ENCODE measurements at regions of chr4 and their contacts with region 1.

Region 1: DNA sequence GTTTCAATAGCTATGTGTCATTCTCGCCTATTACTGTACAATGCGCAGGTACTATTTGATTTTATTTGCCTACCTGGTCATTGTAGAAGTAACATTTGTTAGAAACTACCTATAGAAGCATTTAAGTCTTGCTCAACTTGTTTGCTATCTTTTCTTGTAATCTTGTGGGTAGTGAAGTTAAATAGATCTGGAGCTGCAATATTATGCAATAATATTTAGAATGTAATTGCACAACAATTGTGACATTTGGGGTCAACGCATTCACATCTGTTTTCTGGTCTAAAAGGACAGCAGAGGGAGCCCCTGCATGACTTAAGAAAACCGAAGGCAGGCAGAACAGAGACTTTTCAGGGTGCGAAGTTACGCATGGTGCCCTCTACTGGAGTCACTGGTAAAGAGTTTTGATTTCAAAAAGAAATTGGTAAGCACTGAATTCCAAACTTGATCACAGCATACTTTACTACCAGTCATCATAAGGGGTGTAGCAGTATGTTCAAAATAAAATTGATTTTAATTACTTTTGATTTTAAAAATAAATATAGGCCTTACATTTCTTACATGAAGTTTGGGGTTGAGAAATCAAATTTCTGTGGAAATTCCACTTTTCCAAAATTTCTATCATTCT is 503.2 kb upstream of the FAM241A start:
- DNase-seq: peak; percentile 49
- CTCF ChIP-seq: peak; percentile 77

Region 2: GRCh38 chr4:110631584-110632505 is 1010.2 kb before region 1 on chr4:
- in situ Hi-C with region 1: loop called (anchors 25 kb)
- DNase-seq: peak; percentile 84
- CTCF ChIP-seq: peak; percentile 59

Region 3: DNA sequence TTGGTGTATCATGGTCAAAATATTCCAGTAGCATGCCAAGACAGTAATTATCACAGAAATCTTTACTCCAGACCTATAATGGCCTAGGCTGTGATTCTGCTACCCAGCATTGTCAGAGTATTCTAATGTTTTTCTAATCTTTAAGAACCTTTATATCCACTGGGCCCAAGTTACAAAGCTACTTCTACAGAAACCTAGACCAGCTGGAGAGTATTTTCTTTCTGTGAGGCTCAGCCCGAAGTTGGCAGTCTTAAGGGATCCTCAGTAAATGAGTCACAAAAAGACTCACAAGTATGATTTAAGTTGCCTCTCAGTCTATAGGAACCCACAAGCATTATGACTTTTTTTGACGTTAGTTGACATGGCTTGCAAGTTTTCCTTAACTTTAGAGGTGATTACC is 135.4 kb before region 1 on chr4:
- in situ Hi-C with region 1: no loop called
- DNase-seq: no peak
- CTCF ChIP-seq: no peak

Region 4: GRCh38 chr4:111937368-111937767 is 295.3 kb after region 1 on chr4:
- in situ Hi-C with region 1: loop called (anchors 10 kb)
- DNase-seq: peak; percentile 17
- CTCF ChIP-seq: peak; percentile 36

Region 5: DNA sequence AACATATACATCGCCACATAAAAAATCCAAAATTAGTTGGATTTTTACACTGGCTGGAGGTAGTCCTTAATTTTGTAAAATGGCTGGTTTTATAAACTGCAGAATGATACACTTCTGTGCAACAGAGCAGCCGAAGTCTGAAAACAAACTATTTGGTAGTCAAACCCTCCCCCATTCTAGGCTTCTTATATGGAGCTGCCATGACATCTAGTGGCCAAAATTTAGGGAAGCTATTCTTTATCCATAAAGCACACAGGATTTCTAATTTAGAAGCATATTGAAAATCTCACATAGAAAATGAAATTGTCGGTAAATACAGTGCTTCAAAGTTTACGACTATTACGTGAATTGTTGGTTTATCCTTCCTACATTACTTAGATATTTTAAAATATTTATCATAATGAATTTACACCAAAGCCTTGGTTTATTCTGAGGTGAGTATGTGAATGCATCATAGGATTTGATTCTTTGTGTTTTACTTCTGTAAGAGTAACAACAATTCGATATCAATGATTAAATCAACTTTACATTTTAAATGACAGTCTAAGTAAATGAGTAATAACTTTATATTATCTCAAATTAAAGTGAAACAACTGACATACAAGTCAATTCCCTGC is 389.8 kb after region 1 on chr4:
- in situ Hi-C with region 1: loop called (anchors 10 kb)
- DNase-seq: peak; percentile 50
- CTCF ChIP-seq: peak; percentile 52

Measured in GM13976 (cell line).